SK-N-SH (cell line): ENCODE measurements at regions of chr7 and their contacts with region 1.

Region 1: GRCh38 chr7:20598459-20599309 is 16.8 kb upstream of the ABCB5 start:
- DNase-seq: peak; percentile 59
- H3K4me3 ChIP-seq: no peak overlapping the region; a peak in 1 of 4 replicates
- H3K27ac ChIP-seq: no peak overlapping the region
- H3K4me1 ChIP-seq: peaks cover 0 to 2% of the 10 kb centered on the region in 2 experiments; a peak in 2 of 4 replicates
- H3K27me3 ChIP-seq: no peaks in the 10 kb centered on the region
- CTCF ChIP-seq: peak; percentile 97
- EP300 ChIP-seq: no peak; a peak in 1 of 4 replicates
- RAD21 ChIP-seq: peak; percentile 100

Region 2: GRCh38 chr7:19728716-19729115 is 870.0 kb before region 1 on chr7:
- CTCF ChIA-PET with region 1: interaction called, 10 read pairs
- POLR2A ChIA-PET with region 1: no interaction called
- DNase-seq: no peak
- H3K4me3 ChIP-seq: no peak overlapping the region
- H3K27ac ChIP-seq: no peak overlapping the region
- H3K4me1 ChIP-seq: no peaks in the 10 kb centered on the region
- H3K27me3 ChIP-seq: peaks cover 4% of the 10 kb centered on the region; the same call in 1 of the 2 replicates
- CTCF ChIP-seq: no peak
- EP300 ChIP-seq: no peak
- RAD21 ChIP-seq: no peak

Region 3: DNA sequence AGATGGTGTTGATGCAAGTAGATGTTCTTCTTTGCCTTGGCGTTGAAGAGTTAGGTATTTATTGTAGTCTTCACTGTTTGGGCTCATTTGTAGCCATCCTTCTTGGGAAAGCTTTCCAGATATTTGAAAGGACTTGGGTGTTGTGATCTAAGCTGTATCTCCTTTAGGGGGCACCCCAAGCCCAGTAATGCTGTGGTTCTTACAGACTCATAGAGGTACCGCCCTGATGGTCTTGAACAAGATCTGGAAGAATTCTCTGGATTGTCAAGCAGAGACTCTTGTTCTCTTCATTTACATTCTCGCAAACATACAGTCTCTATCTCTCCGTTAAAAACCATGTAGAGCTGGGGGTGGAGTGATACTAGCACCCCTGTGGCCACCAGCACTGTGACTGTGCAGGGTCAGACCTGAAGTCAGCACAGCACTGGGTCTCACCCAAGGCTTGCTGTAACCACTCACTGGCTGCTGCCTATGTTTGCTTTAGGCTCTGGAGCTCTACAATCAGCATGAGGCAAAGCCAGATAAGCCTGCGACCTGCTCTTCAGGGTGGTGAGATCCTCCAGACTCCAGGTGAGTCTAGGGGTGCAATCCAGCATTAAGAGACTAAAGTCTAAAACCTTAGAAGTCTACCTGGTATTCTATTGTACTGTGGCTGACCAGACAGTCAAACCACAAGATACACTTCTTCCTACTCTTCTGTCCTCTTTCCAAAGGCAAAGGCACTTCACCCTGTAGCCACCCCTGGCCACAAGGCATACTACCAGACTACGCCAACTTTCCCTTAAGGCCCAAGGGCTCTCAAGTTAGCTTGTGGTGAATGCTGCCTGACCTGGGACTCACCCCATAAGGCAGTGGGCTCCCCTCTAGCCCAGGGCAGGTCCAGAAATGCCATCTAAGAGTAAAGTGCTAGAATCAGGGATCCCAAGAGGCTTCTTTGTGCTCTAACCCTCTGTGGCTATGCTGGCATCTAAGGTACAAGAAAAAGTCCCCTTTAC is 615.5 kb before region 1 on chr7:
- CTCF ChIA-PET with region 1: interaction called, 32 read pairs
- POLR2A ChIA-PET with region 1: no interaction called
- DNase-seq: no peak
- H3K4me3 ChIP-seq: no peak overlapping the region
- H3K27ac ChIP-seq: no peak overlapping the region
- H3K4me1 ChIP-seq: no peaks in the 10 kb centered on the region
- H3K27me3 ChIP-seq: no peaks in the 10 kb centered on the region
- CTCF ChIP-seq: peak; percentile 71
- EP300 ChIP-seq: no peak
- RAD21 ChIP-seq: peak; percentile 78

Region 4: GRCh38 chr7:20330240-20330927 is 268.3 kb before region 1 on chr7 and contains the start of gene ITGB8:
- CTCF ChIA-PET with region 1: interaction called, 42 read pairs
- POLR2A ChIA-PET with region 1: interaction called, 16 read pairs
- DNase-seq: peak; percentile 86
- H3K4me3 ChIP-seq: peak within 1 kb of the TSS; percentile 88 to 91
- H3K27ac ChIP-seq: peak within 1 kb of the TSS; percentile 88 to 93
- H3K4me1 ChIP-seq: peaks cover 0 to 10% of the 10 kb centered on the region in 2 experiments; a peak in 3 of 4 replicates
- H3K27me3 ChIP-seq: no peaks in the 10 kb centered on the region
- CTCF ChIP-seq: no peak
- EP300 ChIP-seq: peak in 1 of 2 experiments; percentile 23; a peak in 1 of 4 replicates
- RAD21 ChIP-seq: peak; percentile 2; the same call in 1 of the 2 replicates
- polyA plus RNA-seq, gene ITGB8: 0.62 and 0.99 TPM in 2 replicates

Region 5: DNA sequence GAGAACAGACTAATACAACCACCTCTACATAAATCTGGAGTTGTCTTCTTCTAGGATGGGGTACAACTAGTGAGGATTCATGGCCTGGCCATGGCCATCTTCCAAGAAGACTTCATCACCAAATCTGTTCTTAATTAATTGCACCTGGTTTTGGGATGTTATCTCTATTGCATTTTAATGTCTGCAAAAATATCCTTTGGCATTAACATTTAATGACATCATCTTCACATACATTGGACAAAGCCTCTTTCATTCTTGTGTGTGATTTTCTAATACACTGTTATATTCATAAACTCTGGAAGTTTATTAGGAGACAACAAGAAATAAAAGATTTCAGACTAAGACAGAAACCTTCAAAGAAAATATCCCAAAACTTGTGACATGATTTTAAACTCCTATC is 107.4 kb before region 1 on chr7:
- CTCF ChIA-PET with region 1: no interaction called
- POLR2A ChIA-PET with region 1: no interaction called
- DNase-seq: no peak
- H3K4me3 ChIP-seq: no peak overlapping the region
- H3K27ac ChIP-seq: no peak overlapping the region
- H3K4me1 ChIP-seq: no peaks in the 10 kb centered on the region; a peak in 1 of 4 replicates
- H3K27me3 ChIP-seq: no peaks in the 10 kb centered on the region
- CTCF ChIP-seq: no peak
- EP300 ChIP-seq: no peak
- RAD21 ChIP-seq: no peak

Region 6: GRCh38 chr7:20508109-20508508 is 90.6 kb before region 1 on chr7:
- CTCF ChIA-PET with region 1: interaction called, 18 read pairs
- POLR2A ChIA-PET with region 1: no interaction called
- DNase-seq: no peak
- H3K4me3 ChIP-seq: no peak overlapping the region
- H3K27ac ChIP-seq: no peak overlapping the region
- H3K4me1 ChIP-seq: peaks cover 0 to 11% of the 10 kb centered on the region in 2 experiments; a peak in 2 of 4 replicates
- H3K27me3 ChIP-seq: no peaks in the 10 kb centered on the region
- CTCF ChIP-seq: no peak
- EP300 ChIP-seq: no peak
- RAD21 ChIP-seq: peak; percentile 59

Region 7: GRCh38 chr7:20577441-20578071 is 21.1 kb before region 1 on chr7:
- CTCF ChIA-PET with region 1: interaction called, 27 read pairs
- POLR2A ChIA-PET with region 1: no interaction called
- DNase-seq: no peak
- H3K4me3 ChIP-seq: no peak overlapping the region
- H3K27ac ChIP-seq: no peak overlapping the region
- H3K4me1 ChIP-seq: peaks cover 0 to 20% of the 10 kb centered on the region in 2 experiments; a peak in 2 of 4 replicates
- H3K27me3 ChIP-seq: no peaks in the 10 kb centered on the region
- CTCF ChIP-seq: no peak
- EP300 ChIP-seq: no peak
- RAD21 ChIP-seq: no peak

Region 8: GRCh38 chr7:20730611-20731010 is 131.9 kb after region 1 on chr7:
- CTCF ChIA-PET with region 1: no interaction called
- POLR2A ChIA-PET with region 1: no interaction called
- DNase-seq: no peak
- H3K4me3 ChIP-seq: no peak overlapping the region
- H3K27ac ChIP-seq: no peak overlapping the region
- H3K4me1 ChIP-seq: no peaks in the 10 kb centered on the region
- H3K27me3 ChIP-seq: no peaks in the 10 kb centered on the region; the same call in 1 of the 2 replicates
- CTCF ChIP-seq: no peak
- EP300 ChIP-seq: no peak
- RAD21 ChIP-seq: no peak